GM10248 (cell line): ENCODE measurements at regions of chr1 and their contacts with region 1.

Region 1: DNA sequence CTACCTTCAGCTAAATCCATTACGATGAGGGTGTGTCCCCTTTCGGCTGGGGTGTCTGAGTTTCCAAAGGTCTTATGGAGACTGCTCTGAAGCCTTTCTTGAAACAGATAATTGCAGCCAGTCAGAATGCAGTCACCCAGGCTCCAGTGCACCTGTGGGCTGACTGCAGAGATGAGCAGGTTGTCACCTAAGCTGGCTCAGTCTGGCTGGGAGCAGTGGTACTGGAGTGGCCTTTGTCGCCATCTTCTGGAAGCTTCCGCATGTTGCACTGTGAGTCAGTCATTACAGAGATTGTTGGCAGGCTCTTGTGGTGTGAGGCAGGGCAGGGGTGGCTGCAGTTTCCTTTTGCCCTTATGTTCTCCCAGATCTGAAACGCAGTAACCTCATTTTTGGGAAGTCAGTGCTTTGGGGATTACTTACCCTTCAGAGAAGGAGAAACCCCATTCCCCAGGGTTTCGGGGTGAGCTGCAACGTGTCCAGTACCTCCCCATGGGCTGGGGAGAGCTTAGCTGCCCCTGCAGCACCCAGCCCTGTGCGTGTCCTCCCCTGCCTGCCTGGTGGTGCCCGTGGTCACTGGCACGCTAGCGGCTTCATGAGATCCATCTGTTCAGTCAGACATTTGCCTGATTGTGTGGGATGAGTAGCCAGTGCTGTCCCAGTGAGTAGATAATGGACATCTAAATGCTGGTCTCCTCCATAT is 48.0 kb downstream of the SMYD2 start:
- DNase-seq: peak; percentile 82
- CTCF ChIP-seq: peak; percentile 96

Region 2: GRCh38 chr1:213828867-213829266 is 500.1 kb before region 1 on chr1:
- CTCF ChIA-PET with region 1: no interaction called
- POLR2A ChIA-PET with region 1: no interaction called
- DNase-seq: no peak
- CTCF ChIP-seq: no peak

Region 3: DNA sequence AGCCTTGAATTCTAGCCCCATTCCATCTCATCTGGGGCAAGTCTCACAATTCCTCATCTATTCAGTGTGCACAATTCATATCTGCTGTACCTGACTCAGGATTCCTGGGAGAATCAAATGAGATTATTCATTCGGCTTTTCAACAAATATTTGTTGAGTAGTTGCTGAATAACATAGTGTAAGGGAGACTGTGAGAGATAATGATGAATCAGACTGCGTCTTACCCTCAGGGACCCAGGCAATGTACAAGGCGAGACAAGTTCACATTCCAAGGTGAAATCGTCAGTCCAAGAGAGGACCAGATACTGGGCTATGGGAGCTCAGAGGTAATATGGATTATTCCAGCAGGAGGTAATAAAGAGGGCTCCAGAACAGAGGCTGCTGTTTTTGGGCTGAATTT is 115.8 kb before region 1 on chr1:
- CTCF ChIA-PET with region 1: interaction called, 184 read pairs
- POLR2A ChIA-PET with region 1: interaction called, 8 read pairs
- DNase-seq: no peak
- CTCF ChIP-seq: no peak

Region 4: GRCh38 chr1:214271174-214271858 is 57.6 kb before region 1 on chr1:
- CTCF ChIA-PET with region 1: interaction called, 77 read pairs
- POLR2A ChIA-PET with region 1: no interaction called
- DNase-seq: no peak
- CTCF ChIP-seq: peak; percentile 34

Region 5: GRCh38 chr1:214303141-214303930 is 25.6 kb before region 1 on chr1:
- CTCF ChIA-PET with region 1: interaction called, 16 read pairs
- POLR2A ChIA-PET with region 1: no interaction called
- DNase-seq: no peak
- CTCF ChIP-seq: no peak

Region 6: DNA sequence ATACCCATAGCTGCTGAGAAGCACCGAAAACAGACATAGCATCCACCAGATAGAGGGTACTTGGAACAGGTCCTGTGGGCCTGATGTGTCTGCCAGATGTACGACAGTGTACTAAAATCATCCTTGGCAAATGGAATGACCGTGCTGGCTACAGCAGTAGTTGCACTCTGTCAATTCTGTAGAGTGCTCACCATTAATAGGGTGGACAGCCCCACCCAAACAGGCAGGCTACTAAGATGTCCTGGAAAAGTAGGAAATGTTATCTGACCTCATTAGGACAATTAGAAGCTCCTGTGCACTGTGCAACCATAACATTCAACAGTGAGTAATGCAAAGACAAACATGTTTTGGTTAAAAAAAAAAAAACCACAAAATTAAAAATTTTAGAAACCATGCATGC is 116.3 kb after region 1 on chr1:
- CTCF ChIA-PET with region 1: interaction called, 11 read pairs
- POLR2A ChIA-PET with region 1: no interaction called
- DNase-seq: no peak
- CTCF ChIP-seq: no peak

Region 7: GRCh38 chr1:214632091-214632490 is 303.2 kb after region 1 on chr1:
- CTCF ChIA-PET with region 1: interaction called, 42 read pairs
- POLR2A ChIA-PET with region 1: no interaction called
- DNase-seq: no peak
- CTCF ChIP-seq: no peak